MCF 10A (cell line): ENCODE measurements at regions of chr20 and their contacts with region 1.

Region 1: GRCh38 chr20:9407805-9408421 is 106.5 kb upstream of the LAMP5 start:
- DNase-seq: peak; percentile 80
- H3K4me3 Mint-ChIP-seq: no peak overlapping the region
- H3K27ac Mint-ChIP-seq: no peak overlapping the region
- H3K4me1 Mint-ChIP-seq: no peaks in the 10 kb centered on the region
- H3K27me3 Mint-ChIP-seq: no peaks in the 10 kb centered on the region
- CTCF ChIP-seq: peak; percentile 84

Region 2: GRCh38 chr20:9377007-9377406 is 30.9 kb before region 1 on chr20:
- CTCF ChIA-PET with region 1: no interaction called
- POLR2A ChIA-PET with region 1: no interaction called
- intact Hi-C with region 1: no loop called
- DNase-seq: no peak
- H3K4me3 Mint-ChIP-seq: no peak overlapping the region
- H3K27ac Mint-ChIP-seq: no peak overlapping the region
- H3K4me1 Mint-ChIP-seq: no peaks in the 10 kb centered on the region
- H3K27me3 Mint-ChIP-seq: no peaks in the 10 kb centered on the region
- CTCF ChIP-seq: no peak

Region 3: GRCh38 chr20:9392892-9393857 is 14.7 kb before region 1 on chr20:
- CTCF ChIA-PET with region 1: interaction called, 41 read pairs
- POLR2A ChIA-PET with region 1: no interaction called
- intact Hi-C with region 1: no loop called
- DNase-seq: peak; percentile 76
- H3K4me3 Mint-ChIP-seq: no peak overlapping the region
- H3K27ac Mint-ChIP-seq: no peak overlapping the region
- H3K4me1 Mint-ChIP-seq: no peaks in the 10 kb centered on the region
- H3K27me3 Mint-ChIP-seq: no peaks in the 10 kb centered on the region
- CTCF ChIP-seq: peak; percentile 71

Region 4: DNA sequence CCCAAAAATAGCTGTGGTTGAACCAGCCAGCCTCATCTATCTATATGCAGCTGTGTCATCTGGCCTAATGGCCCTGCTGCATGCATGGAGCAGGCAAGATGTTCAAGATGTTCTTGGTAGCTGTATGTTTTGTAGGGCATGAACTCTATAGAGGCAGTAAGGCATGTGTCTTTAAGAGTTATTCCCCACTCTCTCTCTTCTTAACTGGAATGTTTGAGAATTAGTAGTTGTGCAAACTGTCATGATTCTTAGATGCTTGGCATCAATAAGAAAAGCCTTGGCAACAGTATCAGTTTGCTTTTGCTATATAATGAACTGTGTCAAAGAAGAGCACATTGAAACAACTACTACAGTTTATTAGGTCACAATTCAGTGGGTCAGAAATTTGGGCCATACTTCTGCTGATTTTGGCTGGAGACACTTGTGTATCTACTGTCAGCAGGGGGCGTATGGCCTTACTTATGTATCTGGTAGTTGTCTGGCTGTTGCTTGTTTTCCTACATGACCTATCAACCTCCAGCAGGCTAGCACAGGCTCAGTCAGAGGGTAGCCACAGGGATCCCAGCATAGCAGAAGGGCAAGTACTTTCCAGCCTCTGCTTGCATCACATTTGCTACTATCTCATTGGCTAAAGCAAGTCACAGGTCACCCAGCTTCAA is 50.4 kb after region 1 on chr20:
- CTCF ChIA-PET with region 1: interaction called, 29 read pairs
- POLR2A ChIA-PET with region 1: no interaction called
- intact Hi-C with region 1: no loop called
- DNase-seq: peak; percentile 64
- H3K4me3 Mint-ChIP-seq: no peak overlapping the region
- H3K27ac Mint-ChIP-seq: no peak overlapping the region
- H3K4me1 Mint-ChIP-seq: no peaks in the 10 kb centered on the region
- H3K27me3 Mint-ChIP-seq: no peaks in the 10 kb centered on the region
- CTCF ChIP-seq: no peak

Region 5: GRCh38 chr20:9592419-9592818 is 184.5 kb after region 1 on chr20:
- CTCF ChIA-PET with region 1: interaction called, 194 read pairs
- POLR2A ChIA-PET with region 1: no interaction called
- intact Hi-C with region 1: no loop called
- DNase-seq: no peak
- H3K4me3 Mint-ChIP-seq: no peak overlapping the region
- H3K27ac Mint-ChIP-seq: no peak overlapping the region
- H3K4me1 Mint-ChIP-seq: no peaks in the 10 kb centered on the region
- H3K27me3 Mint-ChIP-seq: no peaks in the 10 kb centered on the region
- CTCF ChIP-seq: no peak

Region 6: GRCh38 chr20:9616833-9617489 is 209.0 kb after region 1 on chr20:
- CTCF ChIA-PET with region 1: interaction called, 748 read pairs
- POLR2A ChIA-PET with region 1: interaction called, 8 read pairs
- intact Hi-C with region 1: no loop called
- DNase-seq: peak; percentile 72
- H3K4me3 Mint-ChIP-seq: no peak overlapping the region
- H3K27ac Mint-ChIP-seq: no peak overlapping the region
- H3K4me1 Mint-ChIP-seq: no peaks in the 10 kb centered on the region
- H3K27me3 Mint-ChIP-seq: peaks cover 28% of the 10 kb centered on the region
- CTCF ChIP-seq: peak; percentile 93

Region 7: GRCh38 chr20:9945408-9945807 is 537.5 kb after region 1 on chr20:
- CTCF ChIA-PET with region 1: interaction called, 10 read pairs
- POLR2A ChIA-PET with region 1: no interaction called
- intact Hi-C with region 1: no loop called
- DNase-seq: peak; percentile 43
- H3K4me3 Mint-ChIP-seq: no peak overlapping the region
- H3K27ac Mint-ChIP-seq: no peak overlapping the region
- H3K4me1 Mint-ChIP-seq: no peaks in the 10 kb centered on the region
- H3K27me3 Mint-ChIP-seq: no peaks in the 10 kb centered on the region
- CTCF ChIP-seq: no peak